MCF 10A (cell line): ENCODE measurements at regions of chr12 and their contacts with region 1.

Region 1: GRCh38 chr12:79420146-79420618 is 270.6 kb downstream of the PAWR start:
- DNase-seq: peak; percentile 79
- H3K4me3 Mint-ChIP-seq: no peak overlapping the region
- H3K27ac Mint-ChIP-seq: peak overlapping the region; percentile 49
- H3K4me1 Mint-ChIP-seq: peaks cover 43% of the 10 kb centered on the region
- H3K27me3 Mint-ChIP-seq: no peaks in the 10 kb centered on the region
- CTCF ChIP-seq: peak; percentile 58

Region 2: DNA sequence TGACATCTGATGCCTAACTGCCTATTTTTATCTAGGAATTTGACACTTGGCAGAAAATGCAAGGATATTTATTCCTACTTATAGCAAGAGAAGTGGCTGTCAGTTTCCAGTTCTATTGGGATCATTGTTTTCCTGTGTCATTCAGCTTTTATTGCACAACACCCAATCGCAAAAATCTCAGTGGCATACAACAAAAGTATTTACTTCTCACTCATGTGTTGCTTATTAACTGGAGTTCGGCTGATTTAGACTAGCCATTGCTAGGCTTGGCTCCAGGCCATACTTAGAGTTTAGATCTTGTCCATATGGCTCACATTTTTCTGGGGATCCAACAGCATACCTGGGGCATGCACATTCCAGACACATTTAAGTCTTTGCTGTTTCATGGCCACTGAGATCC is 774.2 kb before region 1 on chr12:
- CTCF ChIA-PET with region 1: no interaction called
- POLR2A ChIA-PET with region 1: no interaction called
- intact Hi-C with region 1: no loop called
- DNase-seq: no peak
- H3K4me3 Mint-ChIP-seq: no peak overlapping the region
- H3K27ac Mint-ChIP-seq: peak overlapping the region; percentile 16
- H3K4me1 Mint-ChIP-seq: peaks cover 7% of the 10 kb centered on the region
- H3K27me3 Mint-ChIP-seq: no peaks in the 10 kb centered on the region
- CTCF ChIP-seq: no peak

Region 3: GRCh38 chr12:79358716-79359300 is 61.4 kb before region 1 on chr12:
- CTCF ChIA-PET with region 1: no interaction called
- POLR2A ChIA-PET with region 1: no interaction called
- intact Hi-C with region 1: no loop called
- DNase-seq: no peak
- H3K4me3 Mint-ChIP-seq: no peak overlapping the region
- H3K27ac Mint-ChIP-seq: no peak overlapping the region
- H3K4me1 Mint-ChIP-seq: no peaks in the 10 kb centered on the region
- H3K27me3 Mint-ChIP-seq: no peaks in the 10 kb centered on the region
- CTCF ChIP-seq: no peak

Region 4: DNA sequence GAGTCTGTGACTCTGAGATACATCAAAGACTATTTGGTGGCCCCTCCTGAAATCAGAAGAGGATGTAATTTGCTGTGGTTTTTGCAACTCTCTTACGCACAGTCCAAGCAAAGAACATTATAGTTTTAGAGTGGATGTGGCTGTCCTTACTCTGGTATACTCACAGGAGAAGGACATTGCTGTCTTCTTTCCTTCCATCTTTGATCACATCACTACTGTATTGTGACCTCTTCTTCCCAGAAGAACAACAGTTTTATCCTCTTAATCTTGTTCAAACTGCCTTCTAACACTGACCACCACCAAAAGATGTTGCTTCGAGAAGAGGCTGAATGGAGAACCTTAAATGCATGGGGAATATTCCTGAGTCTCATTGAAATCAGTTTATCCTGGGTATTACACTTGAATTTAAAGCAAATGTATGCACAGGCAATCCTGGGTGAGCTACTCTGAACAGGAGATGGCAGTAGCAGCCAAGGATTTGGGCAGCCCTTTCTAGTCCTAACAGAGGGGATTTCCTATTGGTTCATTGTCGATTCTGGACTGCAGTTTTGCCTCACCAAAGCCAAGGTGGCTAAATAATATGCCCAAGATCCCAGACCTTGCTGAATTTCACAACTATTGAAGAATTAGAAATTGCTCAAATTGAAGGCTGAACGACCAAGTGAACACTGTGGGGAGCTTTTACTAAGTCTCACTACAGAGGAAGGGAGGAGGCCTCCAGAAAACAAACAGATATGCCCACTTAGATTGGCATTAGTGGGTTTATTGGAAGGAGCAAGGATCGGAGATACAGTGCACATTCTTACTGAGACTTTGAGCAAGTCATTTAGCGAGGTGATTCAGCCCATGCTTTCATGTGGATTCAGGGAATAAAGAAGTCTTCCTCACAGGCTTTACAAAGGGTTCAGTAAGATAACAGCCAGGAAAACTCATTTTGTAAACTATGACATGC is 12.2 kb before region 1 on chr12:
- CTCF ChIA-PET with region 1: interaction called, 23 read pairs
- POLR2A ChIA-PET with region 1: interaction called, 3 read pairs
- intact Hi-C with region 1: no loop called
- DNase-seq: peak; percentile 89
- H3K4me3 Mint-ChIP-seq: no peak overlapping the region
- H3K27ac Mint-ChIP-seq: peak overlapping the region; percentile 54
- H3K4me1 Mint-ChIP-seq: peaks cover 13% of the 10 kb centered on the region
- H3K27me3 Mint-ChIP-seq: no peaks in the 10 kb centered on the region
- CTCF ChIP-seq: peak; percentile 75

Region 5: GRCh38 chr12:79444089-79444488 is 23.9 kb after region 1 on chr12:
- CTCF ChIA-PET with region 1: interaction called, 32 read pairs
- POLR2A ChIA-PET with region 1: interaction called, 5 read pairs
- intact Hi-C with region 1: no loop called
- DNase-seq: no peak
- H3K4me3 Mint-ChIP-seq: no peak overlapping the region
- H3K27ac Mint-ChIP-seq: no peak overlapping the region
- H3K4me1 Mint-ChIP-seq: peaks cover 15% of the 10 kb centered on the region
- H3K27me3 Mint-ChIP-seq: no peaks in the 10 kb centered on the region
- CTCF ChIP-seq: no peak

Region 6: GRCh38 chr12:79517363-79517762 is 97.2 kb after region 1 on chr12:
- CTCF ChIA-PET with region 1: interaction called, 10 read pairs
- POLR2A ChIA-PET with region 1: no interaction called
- intact Hi-C with region 1: no loop called
- DNase-seq: no peak
- H3K4me3 Mint-ChIP-seq: no peak overlapping the region
- H3K27ac Mint-ChIP-seq: no peak overlapping the region
- H3K4me1 Mint-ChIP-seq: peaks cover 5% of the 10 kb centered on the region
- H3K27me3 Mint-ChIP-seq: no peaks in the 10 kb centered on the region
- CTCF ChIP-seq: no peak

Region 7: DNA sequence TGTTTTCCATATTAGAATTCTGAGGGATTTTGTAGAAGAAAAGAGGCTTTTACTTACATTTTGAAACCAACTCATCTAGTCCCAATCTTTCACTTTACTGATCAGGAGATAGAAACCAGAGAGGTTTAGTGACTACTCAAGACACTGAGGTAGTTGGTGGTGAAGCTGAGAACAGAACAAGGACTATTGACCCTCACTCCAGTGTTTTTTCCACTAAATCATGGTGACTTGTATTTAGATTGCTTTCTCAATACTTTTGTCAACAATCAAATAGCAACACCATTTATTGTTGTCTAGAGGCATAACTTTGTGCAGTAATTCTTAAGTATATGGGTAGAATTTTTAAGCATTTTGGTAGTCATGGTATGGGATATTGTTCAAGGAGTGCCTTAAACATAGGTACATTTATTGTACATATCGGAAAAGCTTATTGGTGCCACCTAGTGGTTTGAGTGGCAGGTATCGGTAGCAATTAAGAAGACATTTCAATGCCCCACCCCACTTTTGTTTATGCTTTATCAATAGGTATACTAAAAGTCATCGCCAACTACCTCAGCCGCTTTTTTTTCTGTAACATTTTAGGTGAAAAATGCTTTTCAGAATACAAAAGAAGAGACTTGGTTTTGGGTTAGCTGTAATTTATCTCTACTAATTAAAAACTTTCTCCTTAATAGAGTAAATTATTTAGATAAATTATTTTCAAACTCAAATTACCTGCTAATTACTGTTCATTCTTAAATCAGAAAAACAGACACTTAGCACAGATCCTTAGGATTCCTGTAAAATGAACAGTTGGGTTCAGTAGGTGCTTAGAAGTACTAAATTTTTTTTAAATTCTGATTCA is 317.9 kb after region 1 on chr12:
- CTCF ChIA-PET with region 1: interaction called, 32 read pairs
- POLR2A ChIA-PET with region 1: no interaction called
- intact Hi-C with region 1: loop called (anchors 1 kb)
- DNase-seq: peak; percentile 80
- H3K4me3 Mint-ChIP-seq: no peak overlapping the region
- H3K27ac Mint-ChIP-seq: no peak overlapping the region
- H3K4me1 Mint-ChIP-seq: no peaks in the 10 kb centered on the region
- H3K27me3 Mint-ChIP-seq: no peaks in the 10 kb centered on the region
- CTCF ChIP-seq: peak; percentile 62

Region 8: GRCh38 chr12:80269803-80270552 is 849.8 kb after region 1 on chr12:
- CTCF ChIA-PET with region 1: interaction called, 10 read pairs
- POLR2A ChIA-PET with region 1: no interaction called
- intact Hi-C with region 1: no loop called
- DNase-seq: peak; percentile 69
- H3K4me3 Mint-ChIP-seq: no peak overlapping the region
- H3K27ac Mint-ChIP-seq: no peak overlapping the region
- H3K4me1 Mint-ChIP-seq: peaks cover 23% of the 10 kb centered on the region
- H3K27me3 Mint-ChIP-seq: no peaks in the 10 kb centered on the region
- CTCF ChIP-seq: peak; percentile 68